Activated naive CD8-positive, alpha-beta T cell treated with anti-CD3 and anti-CD28 coated beads, Interleukin-2, amount 10 ng/mL, durations not matched to agents 7 days and 5 days (primary cell): ENCODE measurements at regions of chr12 and their contacts with region 1.

Region 1: GRCh38 chr12:123106628-123107359 is 44.1 kb downstream of the PITPNM2 start:
- DNase-seq: peak; percentile 73
- ATAC-seq: peak; percentile 98
- H3K4me3 Mint-ChIP-seq: peak overlapping the region; percentile 71
- H3K27ac Mint-ChIP-seq: peak overlapping the region; percentile 99
- H3K4me1 Mint-ChIP-seq: peaks cover 56% of the 10 kb centered on the region
- H3K27me3 Mint-ChIP-seq: no peaks in the 10 kb centered on the region

Region 2: GRCh38 chr12:123131879-123132452 is 25.2 kb after region 1 on chr12:
- POLR2A ChIA-PET with region 1: interaction called, 10 read pairs
- DNase-seq: peak; percentile 66
- ATAC-seq: peak; percentile 92
- H3K4me3 Mint-ChIP-seq: peak overlapping the region; percentile 79
- H3K27ac Mint-ChIP-seq: peak overlapping the region; percentile 89
- H3K4me1 Mint-ChIP-seq: peaks cover 26% of the 10 kb centered on the region
- H3K27me3 Mint-ChIP-seq: no peaks in the 10 kb centered on the region

Region 3: GRCh38 chr12:123142518-123142840 is 35.7 kb after region 1 on chr12:
- POLR2A ChIA-PET with region 1: no interaction called
- DNase-seq: no peak
- ATAC-seq: no peak
- H3K4me3 Mint-ChIP-seq: no peak overlapping the region
- H3K27ac Mint-ChIP-seq: no peak overlapping the region
- H3K4me1 Mint-ChIP-seq: peaks cover 18% of the 10 kb centered on the region
- H3K27me3 Mint-ChIP-seq: no peaks in the 10 kb centered on the region